ENCODE measurements at regions of chr20 and their contacts with region 1.

Region 1: DNA sequence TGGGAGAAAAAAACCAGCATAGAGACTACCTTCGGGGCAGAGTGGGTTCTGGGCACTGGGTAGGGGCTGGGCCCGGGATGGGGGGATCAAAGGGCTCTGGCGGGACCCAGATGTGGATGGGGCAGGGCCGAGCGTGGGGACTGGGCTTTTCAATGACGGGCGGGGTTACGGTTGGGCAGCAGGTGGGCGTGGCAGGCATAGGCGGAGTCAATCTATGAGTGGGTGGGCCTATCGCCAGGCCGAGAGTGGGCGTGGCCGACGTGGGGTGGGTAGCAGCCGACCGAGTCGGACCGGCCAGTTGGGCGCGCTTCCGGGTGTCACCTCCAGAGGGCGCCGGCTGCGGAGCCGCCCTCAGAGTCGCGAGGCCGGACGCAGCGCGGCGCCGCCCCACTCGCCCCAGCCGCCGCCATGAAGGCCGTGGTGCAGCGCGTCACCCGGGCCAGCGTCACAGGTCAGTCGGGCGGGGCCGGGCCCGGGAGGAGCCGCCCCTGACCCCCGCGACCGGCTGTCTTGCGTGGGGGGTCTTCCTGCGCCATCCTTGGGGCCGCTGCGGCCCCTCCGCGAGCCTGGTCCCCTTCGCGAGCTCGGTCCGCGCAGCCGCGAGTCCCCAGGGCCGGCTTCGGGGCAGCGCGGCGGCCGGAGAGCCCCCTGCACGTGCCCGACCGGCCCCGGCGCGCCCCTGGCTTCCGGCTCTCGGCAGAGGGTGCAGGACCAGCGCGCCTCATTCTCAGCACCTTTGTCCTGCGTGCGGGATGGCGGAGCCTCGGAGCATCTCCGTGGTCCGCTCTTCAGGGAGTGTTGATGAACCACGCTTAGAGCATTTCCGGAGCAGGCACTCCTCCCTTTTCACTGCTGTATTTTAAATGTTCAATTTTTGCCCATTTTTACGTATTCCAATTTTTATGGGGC is at the start of gene DTD1:
- DNase-seq: peak; percentile 85
- H3K4me3 ChIP-seq: peak within 1 kb of the TSS; percentile 65 to 83 (median 82)
- H3K27ac ChIP-seq: peak within 1 kb of the TSS; percentile 6
- H3K4me1 ChIP-seq: peaks cover 9% of the 10 kb centered on the region
- H3K27me3 ChIP-seq: peaks cover 4% of the 10 kb centered on the region in 2 experiments
- CTCF ChIP-seq: peak; percentile 70 to 78
- POLR2A ChIP-seq: peak; percentile 64
- total RNA-seq, gene DTD1: 50.8 and 62.9 TPM in 2 replicates

Region 2: DNA sequence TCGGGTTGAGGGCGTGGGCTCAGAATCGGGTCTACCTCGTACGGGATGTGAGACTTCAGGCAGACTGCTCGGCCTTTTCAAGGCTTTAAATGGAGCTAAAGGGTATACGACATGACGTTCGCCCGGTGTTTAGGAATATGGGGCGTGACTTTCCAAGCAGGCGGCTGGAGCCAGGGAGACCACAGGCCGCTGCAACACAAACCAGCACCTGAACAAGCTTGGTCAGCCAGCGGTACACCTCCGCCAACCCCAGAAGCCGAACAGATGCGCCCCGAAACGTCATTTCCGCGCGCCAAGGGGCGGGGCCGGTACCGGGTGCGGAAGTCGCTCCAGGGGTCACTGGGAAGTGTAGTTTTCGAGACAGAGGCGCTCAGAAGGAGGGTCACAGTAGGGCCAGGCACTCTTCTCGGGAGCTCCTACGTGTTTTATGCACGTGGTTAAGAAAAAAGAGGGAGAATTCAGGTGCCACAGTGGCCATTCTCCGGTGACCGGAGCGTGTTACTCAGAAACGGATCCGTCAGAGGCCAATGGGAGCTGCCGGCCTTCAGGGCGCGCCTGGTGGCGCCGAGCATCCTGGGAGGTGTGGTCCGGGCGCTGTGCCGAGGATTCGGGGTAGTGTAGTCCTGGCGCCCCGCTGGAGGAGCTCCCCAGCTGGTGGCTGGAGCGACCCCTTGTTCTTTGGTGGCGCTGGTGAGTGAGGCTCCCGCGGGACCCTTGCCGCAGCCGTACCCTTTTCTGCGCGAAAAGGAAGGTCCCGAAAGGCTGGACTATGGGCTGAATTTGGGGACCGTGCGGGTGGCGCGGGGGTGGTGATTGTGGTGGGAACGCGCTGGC is 299.8 kb before region 1 on chr20 and contains the start of gene ZNF133:
- CTCF ChIA-PET with region 1: no interaction called
- POLR2A ChIA-PET with region 1: no interaction called
- dilution Hi-C with region 1: no loop called
- intact Hi-C with region 1: loop called (anchors 5 kb)
- DNase-seq: peak; percentile 96
- H3K4me3 ChIP-seq: peak within 1 kb of the TSS; percentile 72 to 92 (median 79)
- H3K27ac ChIP-seq: peak within 1 kb of the TSS; percentile 92
- H3K4me1 ChIP-seq: peaks cover 7% of the 10 kb centered on the region
- H3K27me3 ChIP-seq: peaks cover 0 to 8% of the 10 kb centered on the region in 2 experiments
- CTCF ChIP-seq: peak in 1 of 2 donors; percentile 7
- POLR2A ChIP-seq: peak; percentile 90
- total RNA-seq, gene ZNF133: 11.1 and 12.2 TPM in 2 replicates

Region 3: GRCh38 chr20:18388860-18389259 is 199.1 kb before region 1 on chr20:
- CTCF ChIA-PET with region 1: no interaction called
- POLR2A ChIA-PET with region 1: no interaction called
- dilution Hi-C with region 1: no loop called
- intact Hi-C with region 1: loop called (anchors 1 kb)
- DNase-seq: peak; percentile 42
- H3K4me3 ChIP-seq: no peak overlapping the region
- H3K27ac ChIP-seq: no peak overlapping the region
- H3K4me1 ChIP-seq: peaks cover 6% of the 10 kb centered on the region
- H3K27me3 ChIP-seq: no peaks in the 10 kb centered on the region
- CTCF ChIP-seq: no peak
- POLR2A ChIP-seq: no peak

Region 4: DNA sequence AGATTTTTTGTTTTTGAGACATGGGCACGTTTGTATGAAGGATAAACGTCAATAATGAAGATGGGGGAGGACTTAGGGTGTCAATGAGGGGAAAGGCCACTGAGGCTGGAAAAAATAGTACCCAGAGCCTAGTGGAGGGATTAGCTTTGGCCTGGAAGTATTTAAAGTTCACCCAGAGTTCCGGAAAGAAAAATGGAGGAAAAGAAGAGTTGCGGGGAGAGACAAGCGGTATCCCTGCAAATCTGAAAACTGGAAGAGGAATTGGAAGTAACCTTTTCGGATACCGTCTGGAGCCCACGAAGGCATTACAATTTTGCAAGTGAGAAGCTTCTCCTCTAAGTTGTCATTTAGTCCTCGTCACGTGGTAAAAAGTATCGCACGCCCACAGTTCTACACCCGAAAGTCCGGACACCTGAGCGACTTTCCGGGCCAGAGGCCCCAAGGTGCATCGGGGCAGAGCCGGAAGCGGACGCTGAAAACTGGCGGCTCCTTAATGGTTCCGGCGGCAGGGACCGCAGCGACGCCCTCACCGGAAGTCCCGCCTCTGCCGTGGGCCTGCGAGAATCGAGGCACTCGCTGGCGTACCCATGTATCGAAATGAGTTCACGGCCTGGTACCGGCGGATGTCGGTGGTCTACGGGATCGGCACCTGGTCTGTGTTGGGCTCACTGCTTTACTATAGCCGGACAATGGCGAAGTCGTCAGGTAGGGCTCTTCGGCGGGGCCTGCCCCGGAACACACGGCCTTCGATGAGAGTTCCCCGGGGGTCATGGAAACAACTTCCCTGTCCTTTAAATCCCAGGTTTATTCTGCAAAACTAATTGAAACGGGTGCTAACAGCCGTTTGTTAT is 20.8 kb before region 1 on chr20 and contains the start of gene SMIM26:
- CTCF ChIA-PET with region 1: interaction called, 4 read pairs
- POLR2A ChIA-PET with region 1: no interaction called
- dilution Hi-C with region 1: no loop called
- intact Hi-C with region 1: loop called (anchors 1 kb)
- DNase-seq: peak; percentile 81
- H3K4me3 ChIP-seq: peak within 1 kb of the TSS; percentile 68 to 86 (median 72)
- H3K27ac ChIP-seq: peak within 1 kb of the TSS; percentile 22
- H3K4me1 ChIP-seq: peaks cover 10% of the 10 kb centered on the region
- H3K27me3 ChIP-seq: no peaks in the 10 kb centered on the region
- CTCF ChIP-seq: no peak
- POLR2A ChIP-seq: peak; percentile 91
- total RNA-seq, gene SMIM26: 54.1 and 62.4 TPM in 2 replicates

Region 5: GRCh38 chr20:18805881-18806280 is 218.0 kb after region 1 on chr20:
- CTCF ChIA-PET with region 1: no interaction called
- POLR2A ChIA-PET with region 1: no interaction called
- dilution Hi-C with region 1: no loop called
- intact Hi-C with region 1: no loop called
- DNase-seq: no peak
- H3K4me3 ChIP-seq: no peak overlapping the region
- H3K27ac ChIP-seq: no peak overlapping the region
- H3K4me1 ChIP-seq: no peaks in the 10 kb centered on the region
- H3K27me3 ChIP-seq: no peaks in the 10 kb centered on the region
- CTCF ChIP-seq: no peak
- POLR2A ChIP-seq: no peak